ENCODE measurements at regions of chr13 and their contacts with region 1.

Region 1: DNA sequence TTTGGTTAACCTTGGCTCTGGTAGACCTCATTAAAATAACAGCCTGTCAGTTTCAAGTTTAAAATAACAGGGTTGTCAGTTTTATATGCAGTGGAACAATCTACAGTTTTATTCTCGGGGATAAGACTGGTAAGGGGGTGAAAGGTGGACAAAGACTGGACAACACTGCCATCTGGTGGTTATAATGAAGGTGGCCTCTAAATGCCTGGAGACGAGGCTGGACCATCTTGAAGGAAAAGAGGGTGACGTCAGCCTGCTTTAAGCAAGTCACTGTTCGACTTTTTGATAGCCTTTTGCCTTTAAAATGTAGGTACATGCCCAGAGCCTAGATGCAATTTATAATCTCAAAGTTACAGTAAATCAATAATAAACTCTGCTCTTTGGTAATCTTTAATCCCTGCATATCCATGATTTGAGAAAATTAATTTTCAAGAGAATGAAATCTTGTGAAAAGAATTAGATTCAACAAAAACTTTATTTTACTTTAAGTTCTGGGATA is 117.0 kb downstream of the DCT start:
- DNase-seq: peak; percentile 89 to 95 (median 94)
- H3K4me3 ChIP-seq: no peak overlapping the region
- H3K27ac ChIP-seq: no peak overlapping the region
- H3K4me1 ChIP-seq: no peaks in the 10 kb centered on the region
- H3K27me3 ChIP-seq: no peaks in the 10 kb centered on the region

Region 2: DNA sequence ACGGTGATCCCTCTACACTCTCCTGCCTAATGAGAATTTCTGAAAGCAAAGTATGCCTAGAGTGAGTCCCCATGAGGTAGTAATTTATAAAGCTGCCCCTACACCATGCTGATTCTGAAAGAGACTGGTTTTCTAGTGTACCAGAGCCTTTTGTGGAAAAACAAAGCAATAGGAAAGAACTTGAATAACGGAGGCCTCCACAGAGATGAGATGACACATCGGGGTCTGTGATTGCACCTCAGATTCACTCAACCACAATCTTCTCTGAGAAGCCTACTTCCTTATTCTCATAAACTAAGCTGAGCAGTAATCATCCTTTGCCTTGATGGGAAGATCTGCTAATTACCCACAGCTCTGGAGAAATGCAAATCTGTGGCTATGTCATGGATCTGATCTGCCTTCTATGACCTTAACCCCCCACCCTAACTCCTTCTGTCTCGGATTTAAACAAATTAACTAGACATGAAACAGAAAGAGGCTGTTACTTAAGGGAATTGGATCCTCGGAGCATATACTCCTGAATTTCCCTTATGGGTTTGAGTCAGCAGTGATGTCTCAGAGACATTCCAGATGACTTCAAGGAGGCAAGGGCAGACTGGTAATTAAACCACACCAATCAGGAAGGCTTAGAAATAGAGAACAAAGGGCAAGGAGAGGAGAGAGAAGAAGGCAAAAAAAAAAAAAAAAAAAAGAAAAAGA is 11.0 kb before region 1 on chr13:
- CTCF ChIA-PET with region 1: interaction called, 10 read pairs
- POLR2A ChIA-PET with region 1: no interaction called
- DNase-seq: peak in 2 of 3 donors; percentile 59 to 70
- H3K4me3 ChIP-seq: no peak overlapping the region
- H3K27ac ChIP-seq: no peak overlapping the region
- H3K4me1 ChIP-seq: no peaks in the 10 kb centered on the region
- H3K27me3 ChIP-seq: no peaks in the 10 kb centered on the region

Measured in common myeloid progenitor, CD34-positive (primary cell).